ENCODE measurements at regions of chr15 and their contacts with region 1.

Region 1: DNA sequence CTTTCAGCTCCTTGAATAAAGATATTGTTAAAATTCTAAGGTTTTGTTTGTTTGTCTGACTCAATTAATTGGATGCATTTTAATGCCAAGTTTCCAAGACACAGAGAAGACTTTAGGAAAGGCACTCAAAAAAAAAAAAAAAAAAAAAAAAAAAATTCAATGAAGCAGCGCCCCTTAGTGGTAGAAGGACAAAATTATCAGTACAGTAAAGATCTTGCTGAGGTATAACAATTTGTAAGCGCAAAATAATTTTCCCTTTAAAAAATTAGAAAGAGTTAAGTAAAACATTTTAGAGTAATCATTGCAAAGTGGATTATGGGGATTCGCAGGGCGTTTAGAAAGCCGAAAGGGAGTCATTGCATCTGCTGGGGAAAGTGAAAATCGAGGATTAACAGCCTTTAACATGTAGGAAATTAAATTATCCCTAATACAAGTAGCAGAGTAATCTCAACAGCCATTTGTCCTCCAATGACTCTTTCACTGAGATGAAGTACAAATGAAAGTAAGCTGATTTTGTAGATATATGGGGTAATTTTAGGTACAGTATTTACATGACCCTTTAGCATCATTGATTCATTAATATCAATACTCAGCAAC is 5.8 kb upstream of the DIS3L start:
- DNase-seq: peak in 5 of 9 donors; percentile 13 to 31 (median 27)
- ATAC-seq: peak; percentile 42
- H3K4me3 ChIP-seq: no peak overlapping the region
- H3K4me3 Mint-ChIP-seq: peak overlapping the region in 1 of 10 donors; percentile 64
- H3K27ac ChIP-seq: no peak overlapping the region
- H3K27ac Mint-ChIP-seq: peak overlapping the region in 2 of 9 donors; percentile 26 to 45
- H3K4me1 ChIP-seq: peaks cover 9 to 20% of the 10 kb centered on the region in 2 donors
- H3K4me1 Mint-ChIP-seq: peaks cover 12 to 28% (median 28%) of the 10 kb centered on the region in 7 donors
- H3K27me3 ChIP-seq: no peaks in the 10 kb centered on the region
- H3K27me3 Mint-ChIP-seq: peaks cover 0 to 6% (median 0%) of the 10 kb centered on the region in 5 donors

Region 2: GRCh38 chr15:65981837-65982626 is 305.5 kb before region 1 on chr15:
- CTCF ChIA-PET with region 1: no interaction called
- POLR2A ChIA-PET with region 1: no interaction called
- intact Hi-C with region 1: loop called in 1 of 2 experiments (anchors 2 kb)
- DNase-seq: peak; percentile 19 to 76 (median 65)
- ATAC-seq: peak; percentile 90
- H3K4me3 ChIP-seq: peak overlapping the region; percentile 53
- H3K4me3 Mint-ChIP-seq: peak overlapping the region; percentile 55 to 82 (median 71)
- H3K27ac ChIP-seq: no peak overlapping the region
- H3K27ac Mint-ChIP-seq: no peak overlapping the region
- H3K4me1 ChIP-seq: peaks cover 0 to 3% of the 10 kb centered on the region in 2 donors
- H3K4me1 Mint-ChIP-seq: peaks cover 5 to 14% (median 9%) of the 10 kb centered on the region in 7 donors
- H3K27me3 ChIP-seq: no peaks in the 10 kb centered on the region
- H3K27me3 Mint-ChIP-seq: peaks cover 16 to 53% (median 19%) of the 10 kb centered on the region in 5 donors

Region 3: GRCh38 chr15:66251790-66252684 is 35.5 kb before region 1 on chr15:
- CTCF ChIA-PET with region 1: no interaction called
- POLR2A ChIA-PET with region 1: no interaction called
- intact Hi-C with region 1: loop called (anchors 2 to 5 kb)
- DNase-seq: peak in 7 of 9 donors; percentile 22 to 63 (median 36)
- ATAC-seq: peak; percentile 73
- H3K4me3 ChIP-seq: peak overlapping the region; percentile 76
- H3K4me3 Mint-ChIP-seq: peak overlapping the region; percentile 58 to 96 (median 79)
- H3K27ac ChIP-seq: no peak overlapping the region
- H3K27ac Mint-ChIP-seq: no peak overlapping the region
- H3K4me1 ChIP-seq: peaks cover 0 to 14% of the 10 kb centered on the region in 2 donors
- H3K4me1 Mint-ChIP-seq: peaks cover 7 to 28% (median 18%) of the 10 kb centered on the region in 7 donors
- H3K27me3 ChIP-seq: peaks cover 3 to 28% of the 10 kb centered on the region in 2 donors
- H3K27me3 Mint-ChIP-seq: peaks cover 54 to 89% (median 70%) of the 10 kb centered on the region in 5 donors